ENCODE measurements at regions of chr9 and their contacts with region 1.

Region 1: GRCh38 chr9:136482793-136483588 is at the start of gene SEC16A:
- DNase-seq: peak; percentile 98 to 100 (median 100)
- ATAC-seq: peak; percentile 72
- H3K4me3 ChIP-seq: peak within 1 kb of the TSS; percentile 63
- H3K4me3 Mint-ChIP-seq: peak within 1 kb of the TSS; percentile 100
- H3K27ac ChIP-seq: peak within 1 kb of the TSS; percentile 97 to 99
- H3K27ac Mint-ChIP-seq: peak within 1 kb of the TSS; percentile 99
- H3K4me1 ChIP-seq: peaks cover 36% of the 10 kb centered on the region
- H3K4me1 Mint-ChIP-seq: peaks cover 49% of the 10 kb centered on the region
- H3K27me3 ChIP-seq: no peaks in the 10 kb centered on the region
- H3K27me3 Mint-ChIP-seq: no peaks in the 10 kb centered on the region
- CTCF ChIP-seq: no peak
- total RNA-seq, gene SEC16A: 73.0 to 75.0 TPM

Region 2: GRCh38 chr9:136245219-136246150 is 237.5 kb before region 1 on chr9 and contains the start of gene QSOX2:
- CTCF ChIA-PET with region 1: no interaction called
- POLR2A ChIA-PET with region 1: no interaction called
- intact Hi-C with region 1: loop called in 1 of 2 experiments (anchors 5 kb)
- DNase-seq: peak; percentile 73 to 94 (median 84)
- ATAC-seq: peak; percentile 81
- H3K4me3 ChIP-seq: peak within 1 kb of the TSS; percentile 63
- H3K4me3 Mint-ChIP-seq: peak within 1 kb of the TSS; percentile 94
- H3K27ac ChIP-seq: peak within 1 kb of the TSS; percentile 15 to 20
- H3K27ac Mint-ChIP-seq: peak within 1 kb of the TSS; percentile 76
- H3K4me1 ChIP-seq: peaks cover 39% of the 10 kb centered on the region
- H3K4me1 Mint-ChIP-seq: peaks cover 41% of the 10 kb centered on the region
- H3K27me3 ChIP-seq: no peaks in the 10 kb centered on the region
- H3K27me3 Mint-ChIP-seq: no peaks in the 10 kb centered on the region
- CTCF ChIP-seq: no peak
- total RNA-seq, gene QSOX2: 14.4 TPM

Region 3: GRCh38 chr9:136439550-136440408 is 43.2 kb before region 1 on chr9 and contains the start of gene INPP5E:
- CTCF ChIA-PET with region 1: no interaction called
- POLR2A ChIA-PET with region 1: interaction called, 3 read pairs
- intact Hi-C with region 1: loop called in 1 of 2 experiments (anchors 2 kb)
- DNase-seq: peak; percentile 65 to 91 (median 82)
- ATAC-seq: peak; percentile 78
- H3K4me3 ChIP-seq: peak within 1 kb of the TSS; percentile 71
- H3K4me3 Mint-ChIP-seq: peak within 1 kb of the TSS; percentile 97
- H3K27ac ChIP-seq: peak within 1 kb of the TSS in 1 of 2 donors; percentile 29
- H3K27ac Mint-ChIP-seq: peak within 1 kb of the TSS; percentile 92
- H3K4me1 ChIP-seq: peaks cover 35% of the 10 kb centered on the region
- H3K4me1 Mint-ChIP-seq: peaks cover 21% of the 10 kb centered on the region
- H3K27me3 ChIP-seq: no peaks in the 10 kb centered on the region
- H3K27me3 Mint-ChIP-seq: no peaks in the 10 kb centered on the region
- CTCF ChIP-seq: peak; percentile 50
- total RNA-seq, gene INPP5E: 17.2 to 19.4 TPM

Region 4: GRCh38 chr9:136455043-136456002 is 27.7 kb before region 1 on chr9:
- CTCF ChIA-PET with region 1: no interaction called
- POLR2A ChIA-PET with region 1: no interaction called
- intact Hi-C with region 1: no loop called
- DNase-seq: no peak
- ATAC-seq: peak; percentile 25
- H3K4me3 ChIP-seq: no peak overlapping the region
- H3K4me3 Mint-ChIP-seq: peak overlapping the region; percentile 15
- H3K27ac ChIP-seq: no peak overlapping the region
- H3K27ac Mint-ChIP-seq: no peak overlapping the region
- H3K4me1 ChIP-seq: no peaks in the 10 kb centered on the region
- H3K4me1 Mint-ChIP-seq: no peaks in the 10 kb centered on the region
- H3K27me3 ChIP-seq: no peaks in the 10 kb centered on the region
- H3K27me3 Mint-ChIP-seq: no peaks in the 10 kb centered on the region
- CTCF ChIP-seq: no peak

Region 5: GRCh38 chr9:136545966-136546698 is 63.1 kb after region 1 on chr9 and contains the start of gene NOTCH1:
- CTCF ChIA-PET with region 1: interaction called, 3 read pairs
- POLR2A ChIA-PET with region 1: interaction called, 25 read pairs
- intact Hi-C with region 1: loop called (anchors 1 to 5 kb)
- DNase-seq: peak; percentile 71 to 94 (median 84)
- ATAC-seq: peak; percentile 71
- H3K4me3 ChIP-seq: peak within 1 kb of the TSS; percentile 87
- H3K4me3 Mint-ChIP-seq: peak within 1 kb of the TSS; percentile 92
- H3K27ac ChIP-seq: peak within 1 kb of the TSS in 1 of 2 donors; percentile 70
- H3K27ac Mint-ChIP-seq: peak within 1 kb of the TSS; percentile 83
- H3K4me1 ChIP-seq: peaks cover 58% of the 10 kb centered on the region
- H3K4me1 Mint-ChIP-seq: peaks cover 23% of the 10 kb centered on the region
- H3K27me3 ChIP-seq: no peaks in the 10 kb centered on the region
- H3K27me3 Mint-ChIP-seq: no peaks in the 10 kb centered on the region
- CTCF ChIP-seq: no peak
- total RNA-seq, gene NOTCH1: 30.8 to 34.2 TPM

Region 6: DNA sequence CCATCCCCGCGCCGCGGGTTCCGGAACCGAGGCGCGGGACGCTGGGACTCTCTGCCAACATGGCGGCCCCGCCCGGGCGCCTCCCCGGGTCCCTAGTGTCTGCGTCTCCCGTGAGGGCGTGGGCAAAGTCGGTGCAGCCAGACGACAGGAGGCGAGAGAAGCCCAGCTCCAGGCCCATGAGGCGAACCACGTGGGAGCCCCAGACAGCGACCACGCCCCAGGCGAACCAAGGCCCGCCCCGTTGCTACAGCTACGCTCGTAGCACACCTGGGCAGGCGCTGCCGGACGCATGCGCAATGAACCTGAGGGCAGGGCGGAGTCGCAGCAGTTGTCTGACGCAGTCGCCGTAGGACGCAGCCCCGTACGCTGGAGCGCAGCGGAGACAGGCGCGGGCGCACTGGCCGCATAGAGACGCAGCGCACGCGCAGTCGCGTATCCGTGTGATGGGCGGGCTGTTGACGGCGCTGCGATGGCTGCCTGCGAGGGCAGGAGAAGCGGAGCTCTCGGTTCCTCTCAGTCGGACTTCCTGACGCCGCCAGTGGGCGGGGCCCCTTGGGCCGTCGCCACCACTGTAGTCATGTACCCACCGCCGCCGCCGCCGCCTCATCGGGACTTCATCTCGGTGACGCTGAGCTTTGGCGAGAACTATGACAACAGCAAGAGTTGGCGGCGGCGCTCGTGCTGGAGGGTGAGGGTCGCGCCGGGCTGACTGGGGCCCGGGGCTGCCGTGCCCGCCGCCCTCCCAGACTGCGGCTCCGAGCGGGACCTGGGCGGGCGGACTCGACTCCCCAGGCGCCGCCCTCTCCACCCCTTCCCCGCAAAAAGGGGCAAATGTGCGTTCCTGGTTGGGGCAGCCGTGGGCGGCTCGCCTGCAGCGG is 603.8 kb after region 1 on chr9 and contains the start of gene MAN1B1:
- CTCF ChIA-PET with region 1: no interaction called
- POLR2A ChIA-PET with region 1: no interaction called
- intact Hi-C with region 1: loop called in 1 of 2 experiments (anchors 5 kb)
- DNase-seq: peak; percentile 98 to 100 (median 100)
- ATAC-seq: peak; percentile 79
- H3K4me3 ChIP-seq: peak within 1 kb of the TSS; percentile 71
- H3K4me3 Mint-ChIP-seq: peak within 1 kb of the TSS; percentile 93
- H3K27ac ChIP-seq: peak within 1 kb of the TSS; percentile 79 to 90
- H3K27ac Mint-ChIP-seq: peak within 1 kb of the TSS; percentile 89
- H3K4me1 ChIP-seq: peaks cover 22% of the 10 kb centered on the region
- H3K4me1 Mint-ChIP-seq: peaks cover 32% of the 10 kb centered on the region
- H3K27me3 ChIP-seq: no peaks in the 10 kb centered on the region
- H3K27me3 Mint-ChIP-seq: no peaks in the 10 kb centered on the region
- CTCF ChIP-seq: no peak
- total RNA-seq, gene MAN1B1: 60.9 to 66.9 TPM